WTC11 (cell line): ENCODE measurements at regions of chr2 and their contacts with region 1.

Region 1: DNA sequence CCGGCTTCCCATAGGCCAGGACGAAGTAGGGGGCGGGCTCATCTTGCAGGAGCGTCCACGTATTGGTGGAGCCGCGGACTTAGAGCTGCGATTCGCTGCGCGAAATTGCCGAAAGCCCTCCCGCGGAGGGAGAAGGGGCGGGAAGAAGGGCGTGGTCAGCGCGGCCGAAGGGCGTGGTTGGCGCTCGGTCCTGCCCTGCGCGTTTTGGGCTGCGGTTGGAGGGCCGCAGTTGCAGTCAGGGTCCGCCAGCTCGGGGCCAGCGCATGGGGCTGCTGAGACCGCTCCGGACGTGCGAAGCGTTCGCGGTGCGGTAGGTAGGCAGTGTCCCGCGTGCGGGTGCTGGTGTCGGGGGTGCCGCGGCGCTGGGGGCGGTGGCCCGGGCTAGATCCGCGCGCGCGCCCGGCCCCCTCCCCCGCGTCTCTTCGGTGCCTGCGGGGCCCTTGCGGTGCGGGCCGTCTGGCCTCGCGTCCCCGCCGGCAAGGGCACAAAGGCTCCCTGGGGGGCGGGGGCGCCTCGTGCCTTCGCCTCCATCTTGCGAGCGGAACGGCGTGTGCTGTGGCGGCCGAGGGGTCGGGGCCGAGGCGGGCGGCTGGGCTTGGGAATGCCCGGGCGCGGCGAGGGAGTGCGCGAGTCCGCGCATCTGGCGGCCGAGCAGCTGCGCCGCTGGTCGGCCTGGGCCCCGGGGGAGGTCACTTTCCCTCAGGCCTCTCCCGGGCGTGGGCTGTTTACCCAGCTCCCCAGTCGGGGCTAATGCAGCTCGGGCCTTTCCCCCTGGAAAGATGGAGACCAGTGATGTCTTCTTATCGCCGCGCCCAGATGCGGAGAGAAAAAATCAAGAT is at the start of gene CEP68:
- DNase-seq: peak; percentile 97
- ATAC-seq: peak; percentile 96
- H3K4me3 Mint-ChIP-seq: peak within 1 kb of the TSS; percentile 94
- H3K27ac Mint-ChIP-seq: peak within 1 kb of the TSS; percentile 83
- H3K4me1 Mint-ChIP-seq: peaks cover 33% of the 10 kb centered on the region
- H3K27me3 Mint-ChIP-seq: no peaks in the 10 kb centered on the region; the same call in 1 of the 2 replicates
- CTCF ChIP-seq: no peak
- total RNA-seq, gene CEP68: 14.6 to 16.7 TPM (median 15.3 TPM) in 3 replicates

Region 2: GRCh38 chr2:65045651-65046050 is 10.8 kb before region 1 on chr2:
- CTCF ChIA-PET with region 1: interaction called, 11 read pairs
- POLR2A ChIA-PET with region 1: interaction called, 11 read pairs
- DNase-seq: peak; percentile 52
- ATAC-seq: peak; percentile 73
- H3K4me3 Mint-ChIP-seq: no peak overlapping the region; the same call in 1 of the 2 replicates
- H3K27ac Mint-ChIP-seq: peak overlapping the region; percentile 84
- H3K4me1 Mint-ChIP-seq: peaks cover 42% of the 10 kb centered on the region
- H3K27me3 Mint-ChIP-seq: no peaks in the 10 kb centered on the region; the same call in 1 of the 2 replicates
- CTCF ChIP-seq: no peak